Activated CD4-positive, alpha-beta T cell treated with anti-CD3 and anti-CD28 coated beads for 36 hours (primary cell): ENCODE measurements at regions of chr10 and their contacts with region 1.

Region 1: GRCh38 chr10:24209946-24210491 is 1.1 kb downstream of the KIAA1217 start:
- DNase-seq: peak; percentile 82
- ATAC-seq: peak; percentile 84
- H3K4me3 Mint-ChIP-seq: peak overlapping the region; percentile 68
- H3K27ac Mint-ChIP-seq: peak overlapping the region; percentile 84
- H3K4me1 Mint-ChIP-seq: peaks cover 31% of the 10 kb centered on the region
- H3K27me3 Mint-ChIP-seq: peaks cover 40% of the 10 kb centered on the region

Region 2: GRCh38 chr10:23362879-23363792 is 846.9 kb before region 1 on chr10:
- CTCF ChIA-PET with region 1: no interaction called
- POLR2A ChIA-PET with region 1: no interaction called
- intact Hi-C with region 1: loop called in 1 of 2 experiments (anchors 1 kb)
- DNase-seq: peak; percentile 67
- ATAC-seq: peak; percentile 75
- H3K4me3 Mint-ChIP-seq: peak overlapping the region; percentile 39
- H3K27ac Mint-ChIP-seq: peak overlapping the region; percentile 96
- H3K4me1 Mint-ChIP-seq: peaks cover 60% of the 10 kb centered on the region
- H3K27me3 Mint-ChIP-seq: no peaks in the 10 kb centered on the region

Region 3: GRCh38 chr10:23525406-23525805 is 684.6 kb before region 1 on chr10:
- CTCF ChIA-PET with region 1: no interaction called
- POLR2A ChIA-PET with region 1: no interaction called
- intact Hi-C with region 1: loop called in 1 of 2 experiments (anchors 10 kb)
- DNase-seq: peak; percentile 26
- ATAC-seq: peak; percentile 47
- H3K4me3 Mint-ChIP-seq: no peak overlapping the region
- H3K27ac Mint-ChIP-seq: no peak overlapping the region
- H3K4me1 Mint-ChIP-seq: peaks cover 3% of the 10 kb centered on the region
- H3K27me3 Mint-ChIP-seq: peaks cover 5% of the 10 kb centered on the region

Region 4: DNA sequence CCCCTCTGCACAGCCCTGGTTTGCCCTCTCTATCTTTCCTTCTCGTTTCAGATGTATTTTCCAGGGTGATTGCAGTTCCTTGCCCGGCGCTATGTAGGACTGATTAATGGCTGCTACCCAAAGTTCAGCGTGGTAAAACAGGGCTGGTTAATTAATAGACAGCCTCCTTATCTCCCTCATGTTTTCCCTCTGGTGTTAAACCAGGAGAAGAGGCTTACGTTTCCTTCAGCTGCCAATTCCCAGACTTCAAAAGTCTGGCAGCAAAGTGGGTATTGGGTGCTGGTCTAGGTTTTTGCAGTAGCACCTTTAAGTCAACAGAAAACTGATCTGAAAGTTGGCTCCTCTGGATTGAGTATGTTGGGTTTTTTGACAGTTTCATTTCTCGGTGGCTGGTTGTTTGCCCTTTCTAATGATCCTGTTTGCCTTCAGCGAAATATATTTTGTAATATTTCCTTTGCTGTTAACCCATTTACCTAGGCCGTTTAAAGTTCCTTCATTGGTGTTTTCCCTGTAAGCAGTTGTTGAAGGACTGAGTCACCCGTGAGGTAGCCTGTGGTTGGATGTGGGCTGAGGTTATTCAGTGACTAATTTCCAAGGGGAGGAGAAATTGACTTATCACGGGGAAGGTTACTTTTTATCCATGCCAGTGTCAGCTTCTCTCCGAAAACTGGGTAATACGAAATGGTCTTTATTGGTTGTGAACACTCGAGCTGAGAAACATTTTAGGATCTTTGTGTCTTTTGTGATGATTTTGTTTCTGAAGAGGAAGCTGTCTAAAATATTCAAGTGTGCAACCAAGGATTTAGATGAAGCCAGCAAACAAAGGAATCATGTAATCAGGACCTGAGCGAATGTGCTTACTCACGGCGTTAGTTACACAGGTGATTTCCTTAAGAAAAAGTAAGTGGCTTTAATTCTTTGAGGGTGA is 256.1 kb after region 1 on chr10:
- CTCF ChIA-PET with region 1: no interaction called
- POLR2A ChIA-PET with region 1: no interaction called
- intact Hi-C with region 1: loop called (anchors 2 to 5 kb)
- DNase-seq: peak; percentile 80
- ATAC-seq: peak; percentile 79
- H3K4me3 Mint-ChIP-seq: no peak overlapping the region
- H3K27ac Mint-ChIP-seq: no peak overlapping the region
- H3K4me1 Mint-ChIP-seq: peaks cover 37% of the 10 kb centered on the region
- H3K27me3 Mint-ChIP-seq: peaks cover 18% of the 10 kb centered on the region

Region 5: GRCh38 chr10:24569828-24570657 is 360.0 kb after region 1 on chr10:
- CTCF ChIA-PET with region 1: no interaction called
- POLR2A ChIA-PET with region 1: no interaction called
- intact Hi-C with region 1: no loop called
- DNase-seq: no peak
- ATAC-seq: no peak
- H3K4me3 Mint-ChIP-seq: no peak overlapping the region
- H3K27ac Mint-ChIP-seq: no peak overlapping the region
- H3K4me1 Mint-ChIP-seq: peaks cover 5% of the 10 kb centered on the region
- H3K27me3 Mint-ChIP-seq: peaks cover 10% of the 10 kb centered on the region

Region 6: DNA sequence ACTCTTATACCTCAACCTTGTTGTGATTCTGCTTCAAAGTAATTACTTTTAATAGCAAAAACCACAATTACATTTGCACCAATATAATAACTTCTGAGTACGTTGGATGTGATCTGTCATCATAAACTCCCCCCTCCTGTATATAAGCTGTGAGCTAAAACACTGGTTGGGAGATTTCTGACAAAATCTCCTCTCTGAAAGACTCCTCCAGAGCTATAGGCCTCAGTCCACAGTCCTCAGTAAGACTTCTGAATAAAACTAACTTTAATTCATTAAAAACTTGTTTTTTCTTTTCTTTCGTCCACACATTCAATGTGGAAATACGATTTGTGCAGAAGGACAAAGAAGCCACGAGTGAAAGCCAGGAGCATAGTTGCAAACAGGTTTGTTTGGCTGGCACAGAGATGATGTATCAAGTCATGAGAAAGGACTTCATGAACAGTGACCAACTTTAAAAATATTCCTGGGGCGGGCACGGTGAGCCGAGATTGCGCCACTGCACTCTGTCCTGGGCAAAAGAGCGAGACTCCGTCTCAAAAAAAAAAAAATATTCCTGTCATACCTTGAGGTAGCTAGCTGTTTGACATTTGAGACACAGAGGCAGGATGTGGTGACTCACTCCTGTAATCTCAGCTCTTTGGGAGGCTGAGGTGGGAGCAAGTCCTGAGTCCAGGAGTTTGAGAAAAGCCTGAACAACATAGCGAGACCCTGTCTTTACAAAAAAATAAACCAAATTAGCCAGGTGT is 604.7 kb after region 1 on chr10:
- CTCF ChIA-PET with region 1: no interaction called
- POLR2A ChIA-PET with region 1: interaction called, 12 read pairs
- intact Hi-C with region 1: no loop called
- DNase-seq: no peak
- ATAC-seq: peak; percentile 77
- H3K4me3 Mint-ChIP-seq: no peak overlapping the region
- H3K27ac Mint-ChIP-seq: no peak overlapping the region
- H3K4me1 Mint-ChIP-seq: peaks cover 3% of the 10 kb centered on the region
- H3K27me3 Mint-ChIP-seq: no peaks in the 10 kb centered on the region